ENCODE measurements at regions of chr19 and their contacts with region 1.

Region 1: DNA sequence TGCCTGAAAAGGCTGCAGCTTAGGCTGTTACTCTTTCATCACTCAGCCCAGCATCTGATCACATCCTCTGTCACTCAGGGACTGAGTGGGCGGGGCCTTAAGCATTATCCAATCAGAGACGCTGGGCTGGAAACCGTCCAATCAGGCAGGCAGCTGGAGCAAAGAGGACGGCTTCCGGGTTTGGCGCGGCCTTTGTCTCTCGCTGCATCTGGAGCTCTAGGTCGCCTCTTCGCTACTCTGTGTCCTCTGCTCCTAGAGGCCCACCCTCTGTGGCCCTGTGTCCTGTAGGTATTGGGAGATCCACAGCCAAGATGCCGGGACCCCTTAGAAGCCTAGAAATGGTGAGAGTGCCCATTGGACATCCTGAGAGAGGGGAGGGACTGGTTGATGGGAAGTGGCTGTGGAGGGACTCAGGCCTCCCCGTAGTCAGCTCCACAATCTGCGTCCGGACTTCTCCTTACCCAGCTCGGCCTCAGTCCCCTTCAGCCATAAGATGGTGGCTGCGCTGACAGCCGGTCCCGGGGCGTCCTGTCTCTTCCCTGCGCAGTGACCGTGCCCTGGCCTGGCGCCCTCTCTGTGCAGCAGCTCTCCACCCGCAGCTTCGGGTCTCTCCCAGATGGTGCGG is at the start of gene ZNF486:
- DNase-seq: peak; percentile 98
- H3K4me3 ChIP-seq: peak within 1 kb of the TSS; percentile 54 to 71 (median 66)
- H3K27ac ChIP-seq: peak within 1 kb of the TSS; percentile 67 to 85 (median 72)
- H3K4me1 ChIP-seq: peaks cover 0 to 9% (median 7%) of the 10 kb centered on the region in 4 donors
- H3K27me3 ChIP-seq: no peaks in the 10 kb centered on the region
- CTCF ChIP-seq: no peak
- EP300 ChIP-seq: no peak
- POLR2A ChIP-seq: peak in 1 of 2 donors; percentile 32
- total RNA-seq, gene ZNF486: 2.9 to 4.2 (median 3.8) TPM

Region 2: DNA sequence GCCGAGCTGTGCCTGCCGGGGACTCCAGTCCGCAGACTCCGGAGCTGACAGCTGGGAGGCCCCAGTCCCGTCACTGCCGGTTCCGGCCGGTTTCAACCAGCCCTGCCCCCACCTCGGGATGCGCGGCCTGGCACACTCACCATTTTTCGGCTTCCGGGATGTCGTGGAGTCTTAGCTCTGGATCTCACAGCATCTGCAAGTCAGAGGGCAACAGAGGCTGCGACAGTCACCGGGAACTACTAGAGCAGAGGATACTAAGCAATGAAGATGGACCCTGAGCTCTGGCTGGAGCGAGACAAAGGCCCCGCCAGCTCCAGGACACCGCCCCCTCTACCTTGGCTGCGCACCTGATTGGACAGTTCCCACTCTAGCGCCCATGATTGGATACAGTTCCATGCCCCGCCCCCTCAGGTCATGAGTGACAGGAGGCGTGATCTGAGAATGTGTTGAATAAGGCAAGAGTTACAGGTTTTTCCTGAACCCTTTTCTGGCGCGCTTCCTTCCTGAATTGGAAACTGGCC is 127.9 kb before region 1 on chr19 and contains the start of gene ZNF682:
- intact Hi-C with region 1: loop called (anchors 5 kb)
- DNase-seq: peak; percentile 97
- H3K4me3 ChIP-seq: peak within 1 kb of the TSS; percentile 58 to 83 (median 70)
- H3K27ac ChIP-seq: peak within 1 kb of the TSS; percentile 65 to 83 (median 71)
- H3K4me1 ChIP-seq: peaks cover 0 to 12% (median 8%) of the 10 kb centered on the region in 4 donors
- H3K27me3 ChIP-seq: no peaks in the 10 kb centered on the region
- CTCF ChIP-seq: no peak
- EP300 ChIP-seq: peak in 1 of 4 donors; percentile 62
- POLR2A ChIP-seq: no peak
- total RNA-seq, gene ZNF682: 1.8 to 3.0 (median 2.1) TPM

Region 3: GRCh38 chr19:20077791-20078463 is 89.2 kb before region 1 on chr19 and contains the start of gene ZNF90:
- intact Hi-C with region 1: loop called (anchors 5 kb)
- DNase-seq: peak; percentile 99
- H3K4me3 ChIP-seq: peak within 1 kb of the TSS; percentile 36 to 63 (median 53)
- H3K27ac ChIP-seq: peak within 1 kb of the TSS; percentile 63 to 77 (median 67)
- H3K4me1 ChIP-seq: peaks cover 0 to 20% (median 9%) of the 10 kb centered on the region in 4 donors
- H3K27me3 ChIP-seq: no peaks in the 10 kb centered on the region
- CTCF ChIP-seq: no peak
- EP300 ChIP-seq: no peak
- POLR2A ChIP-seq: no peak
- total RNA-seq, gene ZNF90: 2.8 to 4.6 (median 3.6) TPM